ENCODE measurements at regions of chr12 and their contacts with region 1.

Region 1: DNA sequence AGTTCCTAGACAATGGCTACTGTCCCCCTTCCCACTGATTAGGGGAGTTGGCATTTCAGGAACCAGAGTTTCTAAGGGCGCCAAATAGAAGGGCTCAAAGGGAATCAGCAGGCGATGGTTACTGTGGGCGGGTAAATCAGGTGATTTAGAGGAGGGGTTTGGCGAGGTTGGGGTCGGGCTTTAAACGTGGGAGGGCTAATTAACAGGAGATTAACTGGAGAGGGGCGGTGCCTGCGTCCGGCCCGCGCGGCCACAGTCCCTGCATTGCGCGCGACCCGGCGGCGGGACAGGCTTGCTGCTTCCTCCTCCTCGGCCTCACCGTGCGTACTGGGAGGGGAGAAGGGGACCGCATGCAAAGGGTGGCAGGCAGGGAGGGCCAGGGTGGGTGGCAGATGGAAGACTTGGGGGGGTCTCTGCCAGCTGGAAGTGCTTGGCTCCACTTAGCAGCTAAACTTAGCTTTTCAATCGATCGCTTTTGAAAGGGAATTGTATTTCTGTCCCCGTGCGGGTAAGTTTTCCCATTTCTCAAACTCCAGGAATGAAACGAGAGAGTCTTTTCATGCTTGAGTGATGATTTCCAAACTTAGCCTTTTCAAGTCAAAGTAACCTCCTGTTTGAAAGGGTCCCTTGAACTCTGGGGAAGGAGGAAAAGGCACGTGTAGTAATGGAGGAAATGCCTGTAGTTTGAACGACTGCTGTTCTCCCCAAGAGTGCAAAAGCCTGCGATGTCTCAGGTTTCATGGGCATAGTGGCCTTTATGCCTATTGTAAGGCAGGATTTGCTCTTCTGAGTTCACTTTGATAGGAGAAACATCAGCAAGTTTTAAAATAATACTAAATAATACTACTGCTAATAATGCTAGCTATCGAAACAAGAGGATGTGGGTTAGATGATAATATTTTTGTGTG is at the start of gene MGST1:
- DNase-seq: peak; percentile 81 to 95
- H3K4me3 ChIP-seq: peak within 1 kb of the TSS; percentile 87
- H3K27ac ChIP-seq: peak within 1 kb of the TSS; percentile 96
- H3K4me1 ChIP-seq: peaks cover 35% of the 10 kb centered on the region
- H3K27me3 ChIP-seq: no peaks in the 10 kb centered on the region
- CTCF ChIP-seq: no peak
- total RNA-seq, gene MGST1: 750 and 766 TPM in 2 replicates

Region 2: GRCh38 chr12:15956413-15957185 is 391.0 kb before region 1 on chr12:
- CTCF ChIA-PET with region 1: no interaction called
- POLR2A ChIA-PET with region 1: no interaction called
- intact Hi-C with region 1: loop called (anchors 2 kb)
- DNase-seq: peak; percentile 66 to 98
- H3K4me3 ChIP-seq: peak overlapping the region; percentile 22; the same call in 1 of the 2 replicates
- H3K27ac ChIP-seq: peak overlapping the region; percentile 93
- H3K4me1 ChIP-seq: peaks cover 33% of the 10 kb centered on the region
- H3K27me3 ChIP-seq: no peaks in the 10 kb centered on the region
- CTCF ChIP-seq: no peak

Region 3: GRCh38 chr12:16154990-16155389 is 192.7 kb before region 1 on chr12:
- CTCF ChIA-PET with region 1: no interaction called
- POLR2A ChIA-PET with region 1: no interaction called
- intact Hi-C with region 1: no loop called
- DNase-seq: no peak
- H3K4me3 ChIP-seq: no peak overlapping the region
- H3K27ac ChIP-seq: no peak overlapping the region
- H3K4me1 ChIP-seq: no peaks in the 10 kb centered on the region
- H3K27me3 ChIP-seq: no peaks in the 10 kb centered on the region
- CTCF ChIP-seq: no peak

Region 4: GRCh38 chr12:16165506-16165905 is 182.1 kb before region 1 on chr12:
- CTCF ChIA-PET with region 1: no interaction called
- POLR2A ChIA-PET with region 1: no interaction called
- intact Hi-C with region 1: loop called (anchors 5 kb)
- DNase-seq: peak in 1 of 2 experiments; percentile 53
- H3K4me3 ChIP-seq: no peak overlapping the region
- H3K27ac ChIP-seq: no peak overlapping the region
- H3K4me1 ChIP-seq: no peaks in the 10 kb centered on the region
- H3K27me3 ChIP-seq: no peaks in the 10 kb centered on the region
- CTCF ChIP-seq: peak; percentile 80

Region 5: DNA sequence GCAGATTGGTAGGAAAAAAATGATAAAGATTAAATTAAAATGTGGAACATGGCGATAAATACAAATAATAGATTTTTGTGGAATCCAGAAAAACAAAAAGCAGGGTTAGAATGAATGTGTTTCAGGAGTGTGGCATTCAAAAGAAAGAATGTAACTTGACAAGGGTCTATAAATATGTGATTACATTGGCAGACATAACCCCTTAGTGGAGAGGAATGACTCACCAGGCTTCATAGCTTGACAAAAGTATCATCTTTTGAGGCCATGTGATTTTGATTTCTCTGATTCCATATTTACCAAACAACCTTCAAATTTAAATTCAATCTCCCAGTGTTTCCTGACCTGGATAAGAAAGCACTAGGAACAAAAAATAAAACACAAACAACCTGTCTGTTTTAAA is 24.6 kb before region 1 on chr12:
- CTCF ChIA-PET with region 1: interaction called, 4 read pairs
- POLR2A ChIA-PET with region 1: interaction called, 4 read pairs
- intact Hi-C with region 1: loop called (anchors 1 kb)
- DNase-seq: no peak
- H3K4me3 ChIP-seq: no peak overlapping the region
- H3K27ac ChIP-seq: no peak overlapping the region
- H3K4me1 ChIP-seq: peaks cover 18% of the 10 kb centered on the region
- H3K27me3 ChIP-seq: no peaks in the 10 kb centered on the region
- CTCF ChIP-seq: no peak

Region 6: DNA sequence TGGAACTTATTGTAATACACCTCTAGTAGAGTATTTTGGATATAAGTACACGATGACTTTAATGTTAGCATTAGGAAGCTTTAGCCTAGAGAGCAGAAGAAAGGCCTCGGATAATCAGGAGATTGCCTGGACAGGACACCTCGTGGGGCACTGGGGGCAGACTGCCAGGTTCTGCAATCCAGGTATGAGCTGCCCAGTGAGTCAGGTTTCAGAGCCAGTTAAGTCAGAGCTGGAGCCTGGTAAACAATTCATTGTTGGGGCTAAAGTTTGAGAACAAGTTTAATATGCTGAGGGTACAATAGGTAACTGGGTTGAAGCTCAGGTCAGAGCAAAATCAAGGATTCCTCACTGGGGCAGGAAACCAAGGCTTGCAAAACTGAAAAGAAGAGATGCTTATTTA is 1634.9 kb after region 1 on chr12:
- CTCF ChIA-PET with region 1: no interaction called
- POLR2A ChIA-PET with region 1: interaction called, 12 read pairs
- intact Hi-C with region 1: no loop called
- DNase-seq: peak in 1 of 2 experiments; percentile 29
- H3K4me3 ChIP-seq: no peak overlapping the region
- H3K27ac ChIP-seq: no peak overlapping the region
- H3K4me1 ChIP-seq: no peaks in the 10 kb centered on the region
- H3K27me3 ChIP-seq: no peaks in the 10 kb centered on the region
- CTCF ChIP-seq: no peak